ENCODE measurements at regions of chr3 and their contacts with region 1.

Region 1: GRCh38 chr3:52001443-52001974 is 5.8 kb upstream of the RPL29 start:
- DNase-seq: peak; percentile 91
- ATAC-seq: peak; percentile 98
- H3K4me3 Mint-ChIP-seq: no peak overlapping the region
- H3K27ac Mint-ChIP-seq: no peak overlapping the region
- H3K4me1 Mint-ChIP-seq: peaks cover 14% of the 10 kb centered on the region
- H3K27me3 Mint-ChIP-seq: peaks cover 13% of the 10 kb centered on the region

Region 2: DNA sequence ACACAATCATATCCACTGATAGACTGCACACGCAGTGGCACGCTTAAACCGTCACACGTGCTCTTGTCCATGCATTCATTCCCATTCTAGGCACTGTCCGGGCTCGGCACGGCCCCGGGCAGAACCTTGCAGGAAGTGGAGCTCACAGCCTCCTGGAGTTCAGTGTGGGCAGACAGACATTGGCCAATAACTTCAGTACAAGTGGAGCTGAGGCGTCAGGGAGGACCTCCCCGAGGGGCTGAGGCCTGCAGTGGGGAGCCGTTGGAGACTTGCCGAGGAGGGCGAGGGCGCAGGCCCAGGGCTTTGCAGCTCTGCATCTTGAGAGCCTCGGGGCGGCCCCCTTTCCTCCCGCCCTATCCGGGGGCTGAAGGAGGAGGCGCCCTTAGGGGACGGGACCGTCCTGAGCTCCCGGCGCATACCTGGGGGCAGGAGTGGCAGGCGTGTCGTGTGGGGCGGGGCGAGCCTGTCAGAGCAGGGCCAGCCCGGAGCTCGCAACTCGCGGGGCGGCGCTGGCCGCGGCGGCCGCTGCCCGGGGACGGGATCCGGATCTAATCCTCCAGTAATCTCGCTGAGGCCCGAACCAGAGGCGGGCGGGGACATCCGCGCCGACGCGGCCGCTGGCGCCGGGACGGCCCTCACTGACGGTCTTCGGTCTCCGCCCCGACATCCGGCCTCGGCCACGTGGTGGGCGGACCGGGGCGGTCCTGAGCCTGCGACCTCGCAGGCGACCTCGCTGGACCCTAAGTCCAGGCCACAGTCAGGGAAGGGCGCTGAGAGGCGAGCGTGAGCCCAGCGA is 18.5 kb before region 1 on chr3 and contains the start of gene ACY1:
- CTCF ChIA-PET with region 1: interaction called, 14 read pairs
- DNase-seq: peak; percentile 83
- ATAC-seq: peak; percentile 85
- H3K4me3 Mint-ChIP-seq: peak within 1 kb of the TSS; percentile 98
- H3K27ac Mint-ChIP-seq: peak within 1 kb of the TSS; percentile 88
- H3K4me1 Mint-ChIP-seq: peaks cover 29% of the 10 kb centered on the region
- H3K27me3 Mint-ChIP-seq: no peaks in the 10 kb centered on the region
- total RNA-seq, gene ACY1: 18.1 to 21.3 TPM

Region 3: GRCh38 chr3:52056968-52057805 is 55.7 kb after region 1 on chr3:
- CTCF ChIA-PET with region 1: interaction called, 105 read pairs
- DNase-seq: peak; percentile 100
- ATAC-seq: peak; percentile 81
- H3K4me3 Mint-ChIP-seq: peak overlapping the region; percentile 84
- H3K27ac Mint-ChIP-seq: peak overlapping the region; percentile 89
- H3K4me1 Mint-ChIP-seq: peaks cover 30% of the 10 kb centered on the region
- H3K27me3 Mint-ChIP-seq: no peaks in the 10 kb centered on the region

Region 4: GRCh38 chr3:52123106-52123725 is 121.7 kb after region 1 on chr3:
- CTCF ChIA-PET with region 1: interaction called, 98 read pairs
- DNase-seq: peak; percentile 74
- ATAC-seq: peak; percentile 80
- H3K4me3 Mint-ChIP-seq: no peak overlapping the region
- H3K27ac Mint-ChIP-seq: peak overlapping the region; percentile 13
- H3K4me1 Mint-ChIP-seq: peaks cover 16% of the 10 kb centered on the region
- H3K27me3 Mint-ChIP-seq: no peaks in the 10 kb centered on the region

Region 5: DNA sequence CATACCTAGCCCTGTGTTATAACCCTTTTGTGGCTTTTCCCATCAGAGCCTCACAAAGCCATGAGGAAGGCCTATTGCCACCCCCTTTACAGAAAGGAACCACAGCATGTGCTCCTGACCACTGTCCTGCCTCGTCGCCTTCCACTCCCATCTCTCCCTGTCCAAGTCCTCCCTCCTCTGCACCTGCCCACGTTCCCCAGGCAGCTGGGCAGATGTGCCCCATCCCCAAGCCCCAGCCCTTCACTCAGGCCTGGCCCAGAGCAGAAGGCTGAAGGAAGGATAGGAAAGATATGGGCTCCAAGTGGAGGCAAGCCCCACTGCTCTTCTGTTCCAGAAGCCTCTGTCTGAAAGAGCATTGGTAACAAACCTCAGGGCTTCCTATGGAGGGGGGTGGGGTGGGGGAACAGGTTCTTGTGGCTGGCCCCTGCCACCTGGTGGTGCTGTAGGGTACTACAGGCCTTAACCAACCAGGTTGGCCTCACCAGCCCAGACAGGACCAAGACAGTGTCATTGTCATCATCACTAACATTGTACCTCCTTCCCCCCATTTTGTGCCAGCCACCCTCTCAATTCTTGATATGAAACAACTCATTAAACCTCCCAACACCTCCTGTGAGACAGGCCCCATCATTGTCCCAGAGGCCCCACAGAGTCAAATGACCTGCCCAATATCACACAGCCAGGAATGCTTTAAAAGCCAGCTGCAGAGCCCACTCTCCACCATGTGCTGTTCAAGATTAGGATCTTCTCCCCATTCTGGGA is 142.7 kb after region 1 on chr3:
- CTCF ChIA-PET with region 1: interaction called, 107 read pairs
- DNase-seq: peak; percentile 91
- ATAC-seq: peak; percentile 94
- H3K4me3 Mint-ChIP-seq: no peak overlapping the region
- H3K27ac Mint-ChIP-seq: peak overlapping the region; percentile 59
- H3K4me1 Mint-ChIP-seq: peaks cover 11% of the 10 kb centered on the region
- H3K27me3 Mint-ChIP-seq: no peaks in the 10 kb centered on the region

Measured in activated CD8-positive, alpha-beta memory T cell treated with anti-CD3 and anti-CD28 coated beads, Interleukin-2, amount 10 ng/mL, durations not matched to agents 7 days and 5 days (primary cell).